Activated T-helper 2 cell treated with anti-CD3 and anti-CD28 coated beads, Interferon-gamma antibody, Interleukin-2, Interleukin-4, amounts not matched to agents 10 μg/mL and 5 μg/mL and 100 μg/mL, durations not matched to agents 14 hours and 24 hours and 36 hours (primary cell): ENCODE measurements at regions of chr19 and their contacts with region 1.

Region 1: DNA sequence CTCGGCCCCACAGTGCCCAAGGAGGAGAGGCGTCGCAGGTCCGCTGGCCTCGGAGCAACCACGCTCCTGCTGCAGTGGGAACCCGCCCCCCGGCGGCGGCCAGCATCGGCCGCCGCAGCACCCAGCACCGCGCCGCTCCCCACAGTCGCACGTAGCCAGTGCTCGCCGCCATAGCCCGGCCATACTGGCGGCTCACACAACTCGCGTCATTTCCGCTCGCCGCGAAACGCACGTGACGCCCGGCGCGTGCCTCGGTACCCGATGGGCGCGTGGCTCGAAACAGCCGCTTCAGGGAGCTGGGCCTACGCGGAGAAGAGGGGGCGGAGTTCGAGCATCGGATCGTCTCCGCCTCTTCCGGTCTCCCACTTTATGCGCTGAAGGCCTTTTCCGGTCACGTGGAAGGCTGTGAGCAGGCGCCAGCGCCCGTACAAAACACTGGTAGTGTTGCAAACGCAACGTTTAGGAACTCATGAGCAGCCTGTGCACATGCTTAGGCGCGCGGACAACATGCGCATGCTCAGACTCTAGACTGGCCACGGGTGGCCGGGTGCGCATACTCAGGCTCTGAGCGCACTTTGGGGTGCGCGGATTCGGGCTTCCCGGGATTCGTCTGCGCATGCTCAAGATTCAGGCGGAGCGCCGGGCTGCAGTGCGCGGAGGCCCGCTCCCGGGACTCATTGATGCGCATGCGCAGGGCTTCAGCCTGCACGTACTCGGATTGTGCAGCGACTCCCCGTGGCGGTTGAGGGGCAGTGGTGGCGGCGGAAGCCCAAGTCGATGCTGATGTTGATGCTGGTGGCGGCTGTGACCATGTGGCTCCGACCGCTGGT is at the starts of genes CATSPERD and LONP1:
- DNase-seq: peak; percentile 97
- H3K4me3 Mint-ChIP-seq: peak within 1 kb of the TSS; percentile 93
- H3K27ac Mint-ChIP-seq: peak within 1 kb of the TSS; percentile 94
- H3K4me1 Mint-ChIP-seq: peaks cover 20% of the 10 kb centered on the region
- H3K27me3 Mint-ChIP-seq: no peaks in the 10 kb centered on the region
- total RNA-seq, gene CATSPERD: not detected in 2 replicates
- total RNA-seq, gene LONP1: 192 and 196 TPM in 2 replicates

Region 2: GRCh38 chr19:5680437-5681368 is 39.5 kb before region 1 on chr19 and contains the starts of genes HSD11B1L and MICOS13:
- intact Hi-C with region 1: loop called (anchors 2 kb)
- DNase-seq: peak; percentile 98
- H3K4me3 Mint-ChIP-seq: peak within 1 kb of the TSS; percentile 95
- H3K27ac Mint-ChIP-seq: peak within 1 kb of the TSS; percentile 87
- H3K4me1 Mint-ChIP-seq: peaks cover 14% of the 10 kb centered on the region
- H3K27me3 Mint-ChIP-seq: no peaks in the 10 kb centered on the region
- total RNA-seq, gene HSD11B1L: 2.0 and 2.5 TPM in 2 replicates
- total RNA-seq, gene MICOS13: 54.3 and 60.9 TPM in 2 replicates

Region 3: GRCh38 chr19:5690125-5690954 is 29.8 kb before region 1 on chr19 and contains the start of gene RPL36:
- intact Hi-C with region 1: loop called (anchors 1 kb)
- DNase-seq: peak; percentile 99
- H3K4me3 Mint-ChIP-seq: peak within 1 kb of the TSS; percentile 94
- H3K27ac Mint-ChIP-seq: peak within 1 kb of the TSS; percentile 95
- H3K4me1 Mint-ChIP-seq: peaks cover 15% of the 10 kb centered on the region
- H3K27me3 Mint-ChIP-seq: no peaks in the 10 kb centered on the region
- total RNA-seq, gene RPL36: 996 and 1,031 TPM in 2 replicates

Region 4: DNA sequence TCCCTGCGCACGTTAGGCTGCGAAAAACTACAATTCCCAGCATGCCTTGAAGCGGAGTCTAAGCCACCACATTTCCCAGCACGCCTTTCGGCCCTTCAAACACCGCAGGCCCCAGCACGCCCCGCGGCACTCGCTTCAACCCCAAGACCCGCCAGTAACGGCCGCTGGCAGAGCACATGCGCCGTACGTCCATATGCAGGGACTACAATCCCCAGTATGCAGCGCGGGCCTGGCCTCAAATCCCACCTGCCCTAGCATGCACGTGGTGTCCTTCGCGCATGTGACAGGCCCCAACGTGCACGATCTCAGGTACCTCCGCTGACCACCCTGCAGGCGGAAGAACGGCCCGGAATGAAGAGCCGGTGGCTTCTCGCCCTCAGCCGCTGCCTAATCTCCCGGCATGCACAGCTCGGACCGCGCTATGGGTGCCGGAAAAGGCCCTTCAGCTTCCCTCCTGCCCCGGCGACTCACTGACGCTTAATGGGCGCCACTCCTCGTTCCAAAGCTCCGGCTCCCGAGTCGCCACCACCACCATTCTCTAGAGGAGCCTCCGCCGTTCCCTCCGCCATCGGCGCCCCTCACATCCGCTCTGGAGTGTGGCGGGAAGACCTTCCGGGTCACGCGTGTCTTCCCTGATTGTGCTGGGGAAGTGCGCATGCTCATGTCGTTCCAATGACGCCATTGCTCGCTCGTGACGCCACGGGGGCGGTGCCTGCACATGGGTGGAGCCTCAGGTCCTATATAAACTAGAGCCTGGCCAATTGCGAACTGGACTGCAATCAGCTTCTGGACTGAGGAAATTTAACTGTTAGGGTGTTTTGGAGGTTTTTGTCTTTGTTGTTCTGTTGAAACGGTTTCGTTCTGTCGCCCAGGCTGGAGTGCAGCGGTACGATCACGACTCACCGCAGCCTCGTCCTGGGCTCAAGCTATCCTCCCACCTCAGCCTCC is 70.7 kb after region 1 on chr19 and contains the start of gene DUS3L:
- intact Hi-C with region 1: loop called (anchors 2 kb)
- DNase-seq: peak; percentile 95
- H3K4me3 Mint-ChIP-seq: peak within 1 kb of the TSS; percentile 98
- H3K27ac Mint-ChIP-seq: peak within 1 kb of the TSS; percentile 100
- H3K4me1 Mint-ChIP-seq: peaks cover 5% of the 10 kb centered on the region
- H3K27me3 Mint-ChIP-seq: no peaks in the 10 kb centered on the region
- total RNA-seq, gene DUS3L: 74.0 and 84.3 TPM in 2 replicates